Esophagus squamous epithelium (tissue), 5 donors: ENCODE measurements at regions of chr4 and their contacts with region 1.

Region 1: GRCh38 chr4:16196478-16197393 is 29.5 kb downstream of the TAPT1 start:
- DNase-seq: no peak
- H3K4me3 ChIP-seq: peak overlapping the region in 3 of 4 donors; percentile 3 to 47 (median 25)
- H3K27ac ChIP-seq: peak overlapping the region; percentile 28 to 73 (median 64)
- H3K4me1 ChIP-seq: peaks cover 0 to 42% (median 3%) of the 10 kb centered on the region in 3 donors
- H3K27me3 ChIP-seq: no peaks in the 10 kb centered on the region
- CTCF ChIP-seq: peak; percentile 14 to 64 (median 44)
- POLR2A ChIP-seq: no peak

Region 2: GRCh38 chr4:15956179-15956850 is 240.4 kb before region 1 on chr4:
- intact Hi-C with region 1: no loop called
- DNase-seq: peak; percentile 43
- H3K4me3 ChIP-seq: no peak overlapping the region
- H3K27ac ChIP-seq: no peak overlapping the region
- H3K4me1 ChIP-seq: peaks cover 0 to 6% (median 0%) of the 10 kb centered on the region in 3 donors
- H3K27me3 ChIP-seq: no peaks in the 10 kb centered on the region
- CTCF ChIP-seq: peak; percentile 68 to 98 (median 96)
- POLR2A ChIP-seq: no peak

Region 3: DNA sequence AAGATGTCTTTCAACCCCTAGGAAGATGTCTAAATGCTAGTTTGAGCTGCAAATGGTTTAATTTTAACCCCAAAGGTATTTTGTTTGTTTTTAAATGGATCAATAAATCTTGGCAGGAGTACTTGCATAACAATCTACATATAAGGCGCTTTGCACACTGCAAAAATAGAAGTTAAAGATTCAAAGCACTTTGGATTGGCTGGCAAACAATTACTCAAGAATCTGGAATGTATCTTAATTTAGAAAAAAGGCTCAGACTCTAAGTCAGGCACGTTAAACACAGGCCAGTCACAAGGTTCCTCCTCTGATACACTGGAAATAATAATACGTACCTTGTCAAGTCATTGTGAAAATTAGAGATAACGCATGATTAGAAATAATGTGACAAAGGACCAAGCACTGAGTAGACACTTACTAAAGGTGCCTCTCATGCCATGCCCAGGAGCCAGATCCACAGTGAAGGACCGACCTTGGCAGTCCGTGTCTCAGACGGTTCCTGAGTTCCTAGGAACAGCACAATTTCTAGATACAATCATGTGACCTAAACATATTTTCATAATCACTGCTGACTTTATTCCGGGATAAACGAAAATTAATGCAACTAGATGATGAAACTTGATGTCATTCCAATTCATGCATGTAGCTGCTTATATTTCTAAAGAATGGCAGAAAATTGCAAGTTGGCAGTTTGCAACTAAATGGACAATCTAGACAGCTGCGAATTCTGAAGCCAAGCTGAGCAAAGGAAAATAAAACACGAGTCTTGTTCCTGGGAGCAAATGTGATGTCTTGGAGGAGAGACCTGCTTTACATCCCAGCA is 162.5 kb before region 1 on chr4:
- intact Hi-C with region 1: loop called (anchors 5 kb)
- DNase-seq: no peak
- H3K4me3 ChIP-seq: no peak overlapping the region
- H3K27ac ChIP-seq: peak overlapping the region in 2 of 4 donors; percentile 1 to 16
- H3K4me1 ChIP-seq: peaks cover 0 to 7% (median 0%) of the 10 kb centered on the region in 3 donors
- H3K27me3 ChIP-seq: peaks cover 0 to 52% (median 0%) of the 10 kb centered on the region in 4 donors
- CTCF ChIP-seq: no peak
- POLR2A ChIP-seq: no peak